ENCODE measurements at regions of chr13 and their contacts with region 1.

Region 1: DNA sequence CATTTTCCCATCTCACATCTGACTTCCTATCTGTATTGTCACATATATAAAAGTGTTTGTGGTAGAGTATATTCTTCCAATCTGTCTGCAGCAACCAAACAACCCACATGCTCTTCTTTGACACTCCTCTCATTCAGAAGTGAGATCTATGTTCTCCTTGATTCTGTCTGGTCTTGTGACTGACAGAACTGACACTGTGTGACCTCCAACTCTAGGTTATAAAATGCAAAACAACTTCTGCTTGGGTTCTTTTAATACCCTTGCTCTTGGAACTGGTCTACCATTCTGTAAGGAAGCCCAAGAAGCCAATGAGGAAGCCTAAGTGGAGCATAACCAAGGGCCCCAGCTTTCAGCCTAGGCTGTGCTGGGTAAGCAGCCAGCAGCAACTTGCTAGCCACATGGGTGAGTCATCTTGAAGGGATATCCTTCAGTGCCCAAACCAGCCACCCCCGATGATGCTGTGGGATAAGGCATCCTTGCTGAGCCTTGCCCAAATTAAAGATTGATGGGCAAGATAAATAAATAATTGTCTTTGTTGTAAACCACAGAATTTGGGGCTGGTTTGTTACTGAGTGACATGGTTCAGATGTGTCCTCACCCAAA is 18.4 kb upstream of the ITM2B start:
- DNase-seq: no peak
- ATAC-seq: no peak
- H3K4me3 ChIP-seq: no peak overlapping the region
- H3K27ac ChIP-seq: no peak overlapping the region
- H3K4me1 ChIP-seq: peaks cover 0 to 8% (median 0%) of the 10 kb centered on the region in 9 donors
- H3K27me3 ChIP-seq: no peaks in the 10 kb centered on the region
- CTCF ChIP-seq: no peak

Region 2: GRCh38 chr13:48155848-48156247 is 58.8 kb before region 1 on chr13:
- intact Hi-C with region 1: loop called in 1 of 10 experiments (anchors 5 kb)
- DNase-seq: no peak
- ATAC-seq: peak in 6 of 8 donors; percentile 25 to 70 (median 54)
- H3K4me3 ChIP-seq: no peak overlapping the region
- H3K27ac ChIP-seq: peak overlapping the region in 6 of 10 donors; percentile 9 to 83 (median 46)
- H3K4me1 ChIP-seq: peaks cover 0 to 82% (median 11%) of the 10 kb centered on the region in 9 donors
- H3K27me3 ChIP-seq: no peaks in the 10 kb centered on the region
- CTCF ChIP-seq: no peak

Region 3: DNA sequence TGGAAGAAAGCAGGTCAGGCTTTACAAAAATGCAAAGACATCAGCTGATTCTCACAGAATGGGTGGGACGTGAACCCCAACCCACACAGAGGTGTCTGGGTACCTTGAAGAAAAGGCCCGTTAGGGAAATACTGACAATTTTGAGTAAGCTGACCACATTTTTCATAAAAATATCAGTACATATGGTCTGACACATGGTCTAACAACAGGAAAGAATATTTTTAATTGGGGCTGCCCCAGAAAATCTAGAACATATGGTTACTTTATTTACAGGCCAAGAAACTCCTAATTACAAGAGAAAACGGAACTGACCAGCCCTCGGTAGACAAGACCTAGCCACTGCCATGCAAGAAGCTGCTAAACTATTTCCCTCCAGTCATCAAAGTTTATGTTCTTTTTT is 30.4 kb before region 1 on chr13:
- intact Hi-C with region 1: loop called in 1 of 10 experiments (anchors 5 kb)
- DNase-seq: no peak
- ATAC-seq: no peak
- H3K4me3 ChIP-seq: no peak overlapping the region
- H3K27ac ChIP-seq: peak overlapping the region in 1 of 10 donors; percentile 1
- H3K4me1 ChIP-seq: peaks cover 0 to 10% (median 0%) of the 10 kb centered on the region in 9 donors
- H3K27me3 ChIP-seq: no peaks in the 10 kb centered on the region
- CTCF ChIP-seq: no peak

Measured in heart right ventricle (tissue), 16 donors.